ENCODE measurements at regions of chrX and their contacts with region 1.

Region 1: GRCh38 chrX:18709843-18710242 is 2.4 kb downstream of the PPEF1 start:
- DNase-seq: no peak
- H3K4me3 Mint-ChIP-seq: no peak overlapping the region
- H3K27ac Mint-ChIP-seq: no peak overlapping the region
- H3K4me1 Mint-ChIP-seq: no peaks in the 10 kb centered on the region
- H3K27me3 Mint-ChIP-seq: no peaks in the 10 kb centered on the region

Region 2: DNA sequence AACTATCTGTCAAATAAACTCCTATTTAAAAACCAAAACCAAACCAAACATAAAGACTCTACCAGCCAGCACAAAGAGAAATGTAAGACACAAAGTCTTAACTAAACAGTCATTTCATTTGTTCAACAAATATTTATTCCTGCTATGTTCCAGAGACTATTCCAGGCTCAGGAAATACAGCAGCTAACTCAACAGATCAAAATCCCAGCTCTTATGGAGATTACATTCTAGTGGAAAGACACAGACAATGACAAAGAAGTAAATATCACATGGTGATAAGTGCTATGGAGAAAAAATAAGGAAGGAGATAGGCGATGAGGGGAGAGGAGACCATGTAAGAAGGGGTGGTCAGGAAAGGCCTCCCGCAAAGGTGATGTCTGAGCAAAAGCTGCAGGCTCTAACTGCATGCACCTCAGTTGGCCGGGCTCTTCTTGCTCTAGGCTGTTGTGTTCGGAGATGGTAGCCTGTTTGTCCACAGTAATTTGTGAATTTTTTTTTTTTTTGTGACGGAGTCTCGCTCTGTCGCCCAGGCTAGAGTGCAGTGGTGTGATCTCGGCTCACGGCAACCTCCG is 12.7 kb after region 1 on chrX:
- CTCF ChIA-PET with region 1: interaction called, 3 read pairs
- POLR2A ChIA-PET with region 1: interaction called, 15 read pairs
- DNase-seq: no peak
- H3K4me3 Mint-ChIP-seq: no peak overlapping the region
- H3K27ac Mint-ChIP-seq: no peak overlapping the region
- H3K4me1 Mint-ChIP-seq: peaks cover 8% of the 10 kb centered on the region
- H3K27me3 Mint-ChIP-seq: no peaks in the 10 kb centered on the region